Common myeloid progenitor, CD34-positive (primary cell): ENCODE measurements at regions of chr19 and their contacts with region 1.

Region 1: GRCh38 chr19:33302175-33302973 is at the start of gene CEBPA:
- DNase-seq: peak; percentile 90 to 95 (median 94)
- H3K4me3 ChIP-seq: peak within 1 kb of the TSS; percentile 50 to 89 (median 76)
- H3K27ac ChIP-seq: peak within 1 kb of the TSS in 1 of 2 experiments; percentile 61
- H3K4me1 ChIP-seq: peaks cover 5 to 69% (median 56%) of the 10 kb centered on the region in 4 experiments
- H3K27me3 ChIP-seq: no peaks in the 10 kb centered on the region

Region 2: DNA sequence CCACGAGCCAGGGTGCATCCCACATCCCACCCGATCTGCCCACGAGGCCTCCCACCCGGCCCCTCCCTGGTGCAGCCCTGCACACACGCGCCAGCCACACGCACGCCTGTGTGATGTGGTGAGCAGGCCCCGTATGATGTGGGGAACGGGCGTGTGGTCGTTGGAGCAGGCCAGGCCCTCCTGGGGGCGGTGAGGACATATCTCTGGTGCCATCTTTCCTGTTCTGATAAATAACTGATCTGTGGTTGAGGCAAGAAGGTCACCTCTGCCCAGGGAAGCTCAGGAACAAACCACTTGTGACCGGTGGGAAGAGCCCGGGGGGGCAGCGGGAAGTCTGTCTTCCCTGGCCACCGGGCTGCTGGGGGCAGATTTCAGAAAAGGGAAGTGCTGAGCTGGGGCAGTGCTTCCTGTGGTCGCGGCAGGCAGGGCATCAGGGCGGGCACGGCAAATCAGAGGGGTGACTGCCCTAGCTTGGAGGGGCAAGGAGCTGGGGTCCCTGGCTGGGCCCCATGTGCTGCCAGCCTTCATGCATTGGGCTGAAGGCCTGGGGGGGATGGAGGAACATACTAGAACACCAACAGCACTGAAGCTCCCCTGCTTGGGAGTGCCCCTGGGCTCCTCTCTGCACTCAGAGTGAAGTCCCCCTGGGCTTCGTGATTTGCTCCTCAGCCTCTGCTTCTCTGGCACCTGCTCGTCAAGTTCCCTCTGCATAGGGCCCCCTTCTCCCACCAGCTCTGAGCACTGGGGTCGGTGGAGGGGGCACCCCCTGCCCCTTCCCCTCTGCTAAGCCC is 41.6 kb before region 1 on chr19:
- CTCF ChIA-PET with region 1: interaction called, 125 read pairs
- POLR2A ChIA-PET with region 1: interaction called, 45 read pairs
- DNase-seq: peak; percentile 87 to 98 (median 96)
- H3K4me3 ChIP-seq: peak overlapping the region in 4 of 7 experiments; percentile 3 to 30 (median 16)
- H3K27ac ChIP-seq: peak overlapping the region in 1 of 2 experiments; percentile 27
- H3K4me1 ChIP-seq: peaks cover 0 to 60% (median 48%) of the 10 kb centered on the region in 4 experiments
- H3K27me3 ChIP-seq: peaks cover 0 to 2% (median 0%) of the 10 kb centered on the region in 5 experiments

Region 3: DNA sequence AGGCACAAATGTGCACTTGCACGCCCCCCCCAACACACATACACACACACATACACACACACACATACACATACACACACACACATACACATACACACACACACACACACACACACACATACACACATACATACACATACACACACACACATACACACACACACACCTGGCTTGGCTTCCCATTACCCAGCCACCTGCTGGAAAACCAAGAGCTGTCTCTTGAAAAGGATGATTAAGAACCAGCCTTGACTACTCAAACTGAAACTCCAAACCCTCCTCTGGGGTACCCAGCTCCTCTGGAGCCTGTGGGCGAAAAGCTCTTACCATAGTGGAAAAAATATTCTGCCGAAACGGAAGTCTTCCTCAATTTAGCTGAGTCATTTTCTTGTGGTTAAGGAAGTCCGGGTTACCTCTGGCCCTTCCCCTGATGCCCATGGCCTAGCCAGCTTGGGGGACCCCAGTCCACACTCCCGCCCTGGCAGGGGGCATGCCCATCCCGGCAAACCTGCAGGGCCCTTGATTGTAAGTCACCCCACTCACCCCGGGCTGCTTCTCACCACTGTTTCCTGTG is 21.9 kb before region 1 on chr19:
- CTCF ChIA-PET with region 1: interaction called, 3 read pairs
- POLR2A ChIA-PET with region 1: interaction called, 10 read pairs
- DNase-seq: peak in 2 of 3 donors; percentile 56 to 57
- H3K4me3 ChIP-seq: peak overlapping the region in 1 of 7 experiments; percentile 15
- H3K27ac ChIP-seq: no peak overlapping the region
- H3K4me1 ChIP-seq: peaks cover 0 to 53% (median 22%) of the 10 kb centered on the region in 4 experiments
- H3K27me3 ChIP-seq: no peaks in the 10 kb centered on the region

Region 4: DNA sequence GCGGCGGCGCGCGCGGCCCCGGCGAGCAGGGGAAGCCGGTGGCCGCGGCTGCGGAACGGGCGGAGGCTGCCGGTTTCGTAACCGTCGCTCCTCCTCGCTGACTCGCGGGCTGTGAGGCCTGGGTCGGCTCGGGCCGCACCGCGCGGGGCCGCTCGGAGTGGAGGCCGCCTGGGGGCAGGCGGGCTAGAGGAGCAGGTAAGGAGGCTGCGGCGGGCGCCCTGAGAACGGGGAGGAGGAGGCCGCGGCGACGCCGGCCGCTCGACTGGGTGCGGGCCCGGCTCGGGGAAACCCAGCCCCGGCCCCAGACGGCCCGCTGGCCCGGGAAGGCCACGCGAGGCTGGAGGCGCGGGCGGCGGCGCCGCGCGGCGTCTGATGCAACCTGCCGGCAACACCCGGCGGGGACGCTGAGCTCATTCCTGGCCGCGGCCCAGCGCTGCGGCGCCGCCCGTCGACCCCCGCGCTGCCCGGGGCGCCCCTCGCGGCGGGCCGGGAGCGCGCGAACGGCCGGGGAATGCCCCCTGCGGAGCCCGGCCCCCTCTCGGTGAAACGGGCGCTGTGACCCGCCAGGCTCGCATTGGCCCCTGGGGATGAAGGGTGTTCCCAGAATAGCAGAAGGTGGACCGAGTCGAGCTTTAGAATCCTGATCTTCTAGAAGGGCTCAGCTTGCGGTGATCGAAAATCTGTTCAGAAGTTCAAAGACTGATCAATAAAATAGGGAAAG is 71.5 kb after region 1 on chr19 and contains the start of gene CEBPG:
- CTCF ChIA-PET with region 1: interaction called, 12 read pairs
- POLR2A ChIA-PET with region 1: interaction called, 31 read pairs
- DNase-seq: peak; percentile 70 to 85 (median 83)
- H3K4me3 ChIP-seq: peak within 1 kb of the TSS; percentile 64 to 96 (median 81)
- H3K27ac ChIP-seq: peak within 1 kb of the TSS; percentile 93 to 97
- H3K4me1 ChIP-seq: peaks cover 8 to 30% (median 23%) of the 10 kb centered on the region in 4 experiments
- H3K27me3 ChIP-seq: no peaks in the 10 kb centered on the region